ENCODE measurements at regions of chr14 and their contacts with region 1.

Region 1: GRCh38 chr14:64303471-64303917 is 9.3 kb upstream of the ESR2 start:
- DNase-seq: no peak
- ATAC-seq: peak; percentile 65
- H3K4me3 ChIP-seq: no peak overlapping the region
- H3K27ac ChIP-seq: no peak overlapping the region
- H3K4me1 ChIP-seq: peaks cover 0 to 2% of the 10 kb centered on the region in 2 donors
- H3K27me3 ChIP-seq: no peaks in the 10 kb centered on the region

Region 2: DNA sequence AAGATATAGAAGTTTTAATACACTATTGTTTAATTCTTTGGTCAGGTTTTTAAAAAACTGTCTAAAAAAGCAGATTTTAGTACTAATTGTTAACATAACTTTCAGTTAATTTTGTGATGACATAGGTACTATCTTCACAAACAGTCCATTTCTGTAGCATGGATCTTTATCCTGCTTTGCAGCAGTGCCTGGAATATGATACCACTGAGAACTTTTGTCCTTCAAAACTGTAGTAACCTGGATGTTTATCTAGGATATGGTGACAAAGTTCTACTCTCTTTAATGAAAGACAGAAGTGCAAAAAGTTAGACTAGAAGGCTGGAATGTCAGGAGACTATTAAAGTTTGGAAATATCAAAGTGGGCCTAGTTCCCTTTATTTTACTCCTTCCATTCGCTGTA is 290.8 kb before region 1 on chr14:
- intact Hi-C with region 1: loop called (anchors 10 kb)
- DNase-seq: no peak
- ATAC-seq: no peak
- H3K4me3 ChIP-seq: no peak overlapping the region
- H3K27ac ChIP-seq: no peak overlapping the region
- H3K4me1 ChIP-seq: peaks cover 0 to 3% of the 10 kb centered on the region in 2 donors
- H3K27me3 ChIP-seq: no peaks in the 10 kb centered on the region